ENCODE measurements at regions of chr3 and their contacts with region 1.

Region 1: GRCh38 chr3:134242649-134243617 is 7.7 kb downstream of the RYK start:
- DNase-seq: no peak
- ATAC-seq: peak; percentile 63
- H3K4me3 Mint-ChIP-seq: no peak overlapping the region
- H3K27ac Mint-ChIP-seq: peak overlapping the region; percentile 81
- H3K4me1 Mint-ChIP-seq: peaks cover 65% of the 10 kb centered on the region
- H3K27me3 Mint-ChIP-seq: no peaks in the 10 kb centered on the region
- CTCF ChIP-seq: no peak

Region 2: DNA sequence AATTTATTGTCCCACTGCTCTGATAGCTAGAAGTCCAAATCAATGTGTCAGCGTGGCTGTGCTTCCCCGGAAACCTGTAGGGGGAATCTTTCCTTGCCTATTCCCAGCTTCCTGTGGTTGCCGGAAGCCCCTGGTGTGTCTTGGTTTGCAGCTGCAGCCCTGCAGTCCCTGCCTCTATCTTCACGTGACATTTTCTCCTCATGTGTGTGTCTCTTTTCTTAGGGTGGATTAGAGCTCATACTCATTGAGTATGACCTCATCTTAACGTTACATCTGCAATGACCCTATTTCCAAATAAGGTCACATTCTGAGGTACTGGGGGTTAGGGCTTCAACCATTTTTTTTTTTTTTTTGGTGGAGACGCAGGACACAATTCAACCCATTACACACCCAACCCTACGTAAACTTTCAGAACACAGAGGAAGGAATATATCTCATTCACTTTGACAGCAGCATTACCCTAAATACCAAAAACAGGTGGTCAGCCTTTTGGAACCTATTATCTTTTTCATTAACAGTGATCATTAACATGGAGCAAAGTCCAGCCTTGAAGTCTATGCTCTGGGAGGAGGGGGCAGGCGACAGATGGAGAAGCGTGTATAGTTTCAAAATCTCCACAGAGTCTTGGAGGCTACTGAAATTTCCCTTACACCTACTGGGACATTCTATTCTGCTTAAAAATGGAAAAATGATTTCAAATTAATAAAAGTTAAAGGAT is 80.9 kb before region 1 on chr3:
- CTCF ChIA-PET with region 1: no interaction called
- POLR2A ChIA-PET with region 1: no interaction called
- DNase-seq: peak; percentile 45
- ATAC-seq: peak; percentile 96
- H3K4me3 Mint-ChIP-seq: no peak overlapping the region
- H3K27ac Mint-ChIP-seq: peak overlapping the region; percentile 33; the same call in 1 of the 2 replicates
- H3K4me1 Mint-ChIP-seq: peaks cover 12% of the 10 kb centered on the region; the same call in 1 of the 2 replicates
- H3K27me3 Mint-ChIP-seq: no peaks in the 10 kb centered on the region
- CTCF ChIP-seq: no peak

Region 3: DNA sequence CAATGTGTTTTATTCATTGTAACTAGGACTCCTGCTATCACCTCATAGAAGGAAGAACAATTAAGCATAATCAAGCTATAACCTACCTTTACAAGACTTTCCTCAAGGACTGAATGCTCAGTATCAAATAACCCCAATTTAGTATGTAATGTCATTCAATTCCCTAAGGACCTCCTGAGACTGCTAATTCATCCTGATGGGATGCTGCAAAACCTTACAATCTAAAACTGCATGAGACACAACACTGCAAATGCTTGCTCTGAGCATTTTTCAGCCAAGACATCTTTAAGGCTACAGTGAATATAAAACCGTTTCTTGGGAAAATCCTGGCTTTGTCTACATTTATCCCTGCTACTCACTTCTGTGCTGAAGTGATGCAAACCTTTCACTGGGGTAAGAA is 62.2 kb before region 1 on chr3:
- CTCF ChIA-PET with region 1: no interaction called
- POLR2A ChIA-PET with region 1: interaction called, 12 read pairs
- DNase-seq: no peak
- ATAC-seq: no peak
- H3K4me3 Mint-ChIP-seq: no peak overlapping the region
- H3K27ac Mint-ChIP-seq: no peak overlapping the region
- H3K4me1 Mint-ChIP-seq: peaks cover 10% of the 10 kb centered on the region
- H3K27me3 Mint-ChIP-seq: no peaks in the 10 kb centered on the region
- CTCF ChIP-seq: no peak

Region 4: GRCh38 chr3:134228035-134228434 is 14.9 kb before region 1 on chr3:
- CTCF ChIA-PET with region 1: interaction called, 14 read pairs
- POLR2A ChIA-PET with region 1: no interaction called
- DNase-seq: no peak
- ATAC-seq: no peak
- H3K4me3 Mint-ChIP-seq: no peak overlapping the region
- H3K27ac Mint-ChIP-seq: peak overlapping the region; percentile 46; the same call in 1 of the 2 replicates
- H3K4me1 Mint-ChIP-seq: peaks cover 52% of the 10 kb centered on the region
- H3K27me3 Mint-ChIP-seq: no peaks in the 10 kb centered on the region
- CTCF ChIP-seq: no peak

Measured in WTC11 (cell line).